Breast epithelium (tissue), 4 donors: ENCODE measurements at regions of chr17 and their contacts with region 1.

Region 1: GRCh38 chr17:28997806-28998205 is 8.0 kb downstream of the SEZ6 start:
- DNase-seq: no peak
- H3K4me3 ChIP-seq: no peak overlapping the region
- H3K27ac ChIP-seq: no peak overlapping the region
- H3K4me1 ChIP-seq: no peaks in the 10 kb centered on the region
- H3K27me3 ChIP-seq: peaks cover 0 to 14% of the 10 kb centered on the region in 2 donors
- CTCF ChIP-seq: no peak
- POLR2A ChIP-seq: no peak

Region 2: GRCh38 chr17:29007955-29008361 is 10.2 kb after region 1 on chr17:
- intact Hi-C with region 1: loop called (anchors 1 kb)
- DNase-seq: no peak
- H3K4me3 ChIP-seq: no peak overlapping the region
- H3K27ac ChIP-seq: no peak overlapping the region
- H3K4me1 ChIP-seq: no peaks in the 10 kb centered on the region
- H3K27me3 ChIP-seq: peaks cover 5 to 58% of the 10 kb centered on the region in 2 donors
- CTCF ChIP-seq: no peak
- POLR2A ChIP-seq: no peak